ENCODE measurements at regions of chr19 and their contacts with region 1.

Region 1: DNA sequence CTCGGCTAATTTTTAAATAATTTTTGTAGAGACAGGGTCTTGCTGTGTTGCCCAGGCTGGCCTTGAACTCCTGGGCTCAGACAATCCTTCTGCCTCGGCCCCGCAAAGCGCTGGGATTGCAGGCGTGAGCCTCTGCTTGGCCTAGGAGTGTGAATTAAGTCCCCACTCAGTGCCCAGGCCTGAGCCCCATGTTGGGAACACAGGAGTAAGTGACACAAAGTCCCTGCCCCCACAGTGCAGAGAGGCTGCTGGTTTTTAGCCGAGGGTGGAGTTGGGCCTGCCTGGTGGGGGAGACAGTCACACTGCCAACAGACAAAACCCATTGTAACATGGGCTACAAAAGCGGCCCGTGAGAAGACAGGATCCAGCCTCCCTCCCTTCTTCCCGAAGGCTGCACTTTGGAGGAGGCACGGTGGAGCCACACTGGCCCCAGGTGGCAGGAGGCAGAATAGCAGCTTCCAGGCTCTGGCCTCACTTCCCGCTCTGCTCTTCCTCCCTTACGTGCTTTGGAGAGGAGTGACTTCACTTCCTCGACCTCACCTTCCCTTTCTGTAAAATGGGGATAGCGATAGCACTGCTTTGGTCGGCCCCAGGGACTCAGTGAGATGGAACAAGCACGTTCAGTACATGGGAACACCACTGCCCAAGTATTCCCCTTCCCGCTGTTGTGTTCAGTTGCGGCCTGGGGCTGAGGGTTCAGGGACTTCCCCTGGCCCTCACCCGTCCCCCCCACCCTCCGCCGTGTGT is 15.2 kb upstream of the EHD2 start:
- DNase-seq: peak; percentile 20
- ATAC-seq: peak; percentile 83
- H3K4me3 ChIP-seq: no peak overlapping the region
- H3K27ac ChIP-seq: no peak overlapping the region
- H3K4me1 ChIP-seq: no peaks in the 10 kb centered on the region
- H3K27me3 ChIP-seq: no peaks in the 10 kb centered on the region
- CTCF ChIP-seq: peak; percentile 97 to 100 (median 99)
- EP300 ChIP-seq: no peak
- POLR2A ChIP-seq: no peak
- RAD21 ChIP-seq: peak; percentile 98

Region 2: DNA sequence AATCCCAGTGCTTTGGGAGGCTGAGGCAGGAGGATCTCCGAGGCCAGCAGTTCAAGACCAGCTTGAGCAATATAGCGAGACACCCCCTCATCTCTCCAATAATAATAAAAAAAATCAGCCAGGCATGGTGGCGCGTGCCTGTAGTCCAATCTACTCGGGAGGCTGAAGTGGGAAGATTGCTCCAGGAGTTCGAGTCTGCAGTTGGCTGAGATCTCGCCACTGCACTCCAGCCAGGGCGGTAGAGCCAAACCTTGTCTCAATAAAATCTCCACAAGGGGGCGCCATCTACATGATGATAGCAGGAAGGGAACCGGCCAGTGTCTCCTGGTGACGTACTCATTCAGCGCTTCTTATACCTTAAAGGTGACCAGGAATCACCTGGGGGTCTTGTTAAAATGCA is 402.0 kb before region 1 on chr19:
- CTCF ChIA-PET with region 1: no interaction called
- POLR2A ChIA-PET with region 1: no interaction called
- RAD21 ChIA-PET with region 1: no interaction called
- SMC1A ChIA-PET with region 1: no interaction called
- in situ Hi-C with region 1: loop called (anchors 5 kb)
- intact Hi-C with region 1: no loop called
- DNase-seq: no peak
- ATAC-seq: peak; percentile 94
- H3K4me3 ChIP-seq: no peak overlapping the region
- H3K27ac ChIP-seq: no peak overlapping the region
- H3K4me1 ChIP-seq: peaks cover 12% of the 10 kb centered on the region
- H3K27me3 ChIP-seq: no peaks in the 10 kb centered on the region
- CTCF ChIP-seq: peak; percentile 66 to 86 (median 69)
- EP300 ChIP-seq: no peak
- POLR2A ChIP-seq: no peak
- RAD21 ChIP-seq: peak; percentile 89

Region 3: GRCh38 chr19:47436712-47437401 is 261.2 kb before region 1 on chr19:
- CTCF ChIA-PET with region 1: interaction called, 163 read pairs
- POLR2A ChIA-PET with region 1: no interaction called
- RAD21 ChIA-PET with region 1: interaction called, 16 read pairs
- SMC1A ChIA-PET with region 1: interaction called, 8 read pairs
- in situ Hi-C with region 1: no loop called
- intact Hi-C with region 1: loop called (anchors 1 kb)
- DNase-seq: no peak
- ATAC-seq: peak; percentile 96
- H3K4me3 ChIP-seq: no peak overlapping the region
- H3K27ac ChIP-seq: no peak overlapping the region
- H3K4me1 ChIP-seq: no peaks in the 10 kb centered on the region; the same call in none of the 2 replicates
- H3K27me3 ChIP-seq: no peaks in the 10 kb centered on the region; a peak in 2 of 4 replicates
- CTCF ChIP-seq: peak; percentile 77 to 88 (median 85)
- EP300 ChIP-seq: no peak
- POLR2A ChIP-seq: no peak
- RAD21 ChIP-seq: peak; percentile 95